ENCODE measurements at regions of chr6 and their contacts with region 1.

Region 1: GRCh38 chr6:7389451-7390225 is at the starts of genes CAGE1 and RIOK1:
- DNase-seq: peak; percentile 98
- ATAC-seq: peak; percentile 89
- H3K4me3 ChIP-seq: peak within 1 kb of the TSS; percentile 83 to 96 (median 85)
- H3K4me3 Mint-ChIP-seq: peak within 1 kb of the TSS; percentile 96
- H3K27ac ChIP-seq: peak within 1 kb of the TSS; percentile 96 to 100
- H3K27ac Mint-ChIP-seq: peak within 1 kb of the TSS; percentile 99
- H3K4me1 ChIP-seq: peaks cover 18 to 26% of the 10 kb centered on the region in 2 donors
- H3K4me1 Mint-ChIP-seq: peaks cover 34% of the 10 kb centered on the region
- H3K27me3 ChIP-seq: no peaks in the 10 kb centered on the region
- H3K27me3 Mint-ChIP-seq: no peaks in the 10 kb centered on the region
- CTCF ChIP-seq: no peak
- total RNA-seq, gene CAGE1: 0.32 and 0.34 TPM in 2 replicates
- total RNA-seq, gene RIOK1: 25.9 and 32.1 TPM in 2 replicates

Region 2: GRCh38 chr6:7589949-7590917 is 200.6 kb after region 1 on chr6 and contains the start of gene SNRNP48:
- CTCF ChIA-PET with region 1: no interaction called
- POLR2A ChIA-PET with region 1: no interaction called
- intact Hi-C with region 1: loop called (anchors 1 kb)
- DNase-seq: peak; percentile 93
- ATAC-seq: peak; percentile 100
- H3K4me3 ChIP-seq: peak within 1 kb of the TSS; percentile 67 to 97 (median 87)
- H3K4me3 Mint-ChIP-seq: peak within 1 kb of the TSS; percentile 100
- H3K27ac ChIP-seq: peak within 1 kb of the TSS; percentile 23 to 62
- H3K27ac Mint-ChIP-seq: peak within 1 kb of the TSS; percentile 96
- H3K4me1 ChIP-seq: peaks cover 21 to 27% of the 10 kb centered on the region in 2 donors
- H3K4me1 Mint-ChIP-seq: peaks cover 35% of the 10 kb centered on the region
- H3K27me3 ChIP-seq: no peaks in the 10 kb centered on the region
- H3K27me3 Mint-ChIP-seq: no peaks in the 10 kb centered on the region
- CTCF ChIP-seq: no peak
- total RNA-seq, gene SNRNP48: 22.9 and 25.3 TPM in 2 replicates

Region 3: DNA sequence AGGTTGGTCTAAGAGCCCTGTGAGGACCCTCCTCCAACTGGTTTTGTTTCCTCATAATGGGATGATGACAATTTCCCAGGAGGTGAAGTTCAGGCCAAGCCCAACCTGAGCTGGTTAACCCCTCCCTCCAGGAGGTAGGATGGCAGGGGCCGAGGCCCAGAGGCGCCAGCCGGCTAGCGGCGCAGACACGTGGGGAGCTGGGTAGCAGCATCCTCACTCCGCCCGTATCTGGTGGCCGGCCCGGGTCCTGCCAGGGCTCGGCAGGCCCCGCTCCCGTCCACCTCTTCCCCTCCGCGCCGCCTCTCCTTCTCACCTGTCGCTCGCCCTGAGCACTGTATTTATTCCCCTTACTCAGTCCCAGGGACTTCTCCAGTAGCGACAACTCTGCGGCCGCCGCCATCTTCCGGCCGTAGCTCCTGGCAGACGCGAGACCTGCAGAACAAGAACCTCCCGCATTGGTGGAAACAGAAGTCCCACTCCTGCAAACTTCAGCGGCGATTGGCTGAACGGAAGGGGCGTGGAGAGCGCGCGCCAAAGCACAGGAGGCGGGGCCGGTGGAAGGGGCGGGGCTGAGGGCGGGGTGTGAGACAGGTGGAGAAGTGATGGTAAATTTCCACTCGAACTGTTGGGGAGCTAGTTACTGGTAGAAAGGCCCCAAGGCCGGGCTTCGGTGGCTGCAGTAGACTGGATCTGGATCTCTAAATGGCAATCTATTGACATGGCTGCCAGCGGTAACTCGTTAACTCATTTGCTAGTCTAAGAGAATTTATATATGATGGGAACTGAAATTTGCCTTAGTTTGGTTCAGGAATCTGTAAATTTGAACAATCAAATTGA is 712.7 kb after region 1 on chr6 and contains the start of gene EEF1E1:
- CTCF ChIA-PET with region 1: no interaction called
- POLR2A ChIA-PET with region 1: no interaction called
- intact Hi-C with region 1: loop called (anchors 2 kb)
- DNase-seq: peak; percentile 95
- ATAC-seq: peak; percentile 98
- H3K4me3 ChIP-seq: peak within 1 kb of the TSS; percentile 61 to 89 (median 86)
- H3K4me3 Mint-ChIP-seq: peak within 1 kb of the TSS; percentile 96
- H3K27ac ChIP-seq: peak within 1 kb of the TSS; percentile 50 to 76
- H3K27ac Mint-ChIP-seq: peak within 1 kb of the TSS; percentile 97
- H3K4me1 ChIP-seq: peaks cover 12% of the 10 kb centered on the region in 2 donors
- H3K4me1 Mint-ChIP-seq: peaks cover 21% of the 10 kb centered on the region
- H3K27me3 ChIP-seq: peaks cover 0 to 6% (median 2%) of the 10 kb centered on the region in 4 experiments
- H3K27me3 Mint-ChIP-seq: peaks cover 22% of the 10 kb centered on the region
- CTCF ChIP-seq: no peak
- total RNA-seq, gene EEF1E1: 20.1 and 23.1 TPM in 2 replicates

Measured in B cell (primary cell).